Endothelial cell of umbilical vein (primary cell): ENCODE measurements at regions of chr12 and their contacts with region 1.

Region 1: DNA sequence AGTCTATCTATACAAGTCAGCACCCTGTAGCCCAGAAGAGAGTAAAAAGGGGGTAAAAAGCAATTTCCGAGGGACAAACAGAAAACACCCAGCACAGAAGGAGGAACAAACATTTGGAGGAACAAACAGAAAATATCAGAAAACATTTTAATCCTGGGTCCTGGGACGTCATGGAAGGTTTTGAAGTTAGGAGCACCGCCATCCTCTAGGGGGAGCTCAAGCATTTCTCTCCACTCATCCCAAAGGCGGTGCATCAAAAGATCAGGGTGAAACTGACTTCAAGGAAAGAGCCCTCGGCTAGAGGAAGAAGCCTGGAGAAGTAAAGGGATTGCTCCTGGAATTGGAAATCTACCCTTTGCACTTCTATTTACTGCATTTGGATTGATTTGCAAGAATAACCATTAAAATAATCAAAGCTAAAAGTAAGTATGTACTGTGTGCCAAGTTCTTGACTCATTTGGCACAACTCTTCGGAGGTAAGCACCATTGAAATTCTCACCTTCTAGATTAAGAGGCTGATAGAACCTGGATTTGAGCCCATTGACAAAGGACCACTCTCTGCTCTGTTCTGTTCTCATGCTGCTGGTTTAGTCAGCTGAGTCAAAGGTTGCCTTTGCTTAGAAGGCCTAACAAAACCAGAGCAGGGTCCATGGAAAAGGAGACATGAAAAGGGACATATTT is 17.2 kb upstream of the POC1B start:
- DNase-seq: peak; percentile 79
- H3K4me3 ChIP-seq: no peak overlapping the region
- H3K27ac ChIP-seq: no peak overlapping the region
- H3K4me1 ChIP-seq: peaks cover 20% of the 10 kb centered on the region
- H3K27me3 ChIP-seq: no peaks in the 10 kb centered on the region
- CTCF ChIP-seq: peak; percentile 80 to 82
- POLR2A ChIP-seq: no peak

Region 2: DNA sequence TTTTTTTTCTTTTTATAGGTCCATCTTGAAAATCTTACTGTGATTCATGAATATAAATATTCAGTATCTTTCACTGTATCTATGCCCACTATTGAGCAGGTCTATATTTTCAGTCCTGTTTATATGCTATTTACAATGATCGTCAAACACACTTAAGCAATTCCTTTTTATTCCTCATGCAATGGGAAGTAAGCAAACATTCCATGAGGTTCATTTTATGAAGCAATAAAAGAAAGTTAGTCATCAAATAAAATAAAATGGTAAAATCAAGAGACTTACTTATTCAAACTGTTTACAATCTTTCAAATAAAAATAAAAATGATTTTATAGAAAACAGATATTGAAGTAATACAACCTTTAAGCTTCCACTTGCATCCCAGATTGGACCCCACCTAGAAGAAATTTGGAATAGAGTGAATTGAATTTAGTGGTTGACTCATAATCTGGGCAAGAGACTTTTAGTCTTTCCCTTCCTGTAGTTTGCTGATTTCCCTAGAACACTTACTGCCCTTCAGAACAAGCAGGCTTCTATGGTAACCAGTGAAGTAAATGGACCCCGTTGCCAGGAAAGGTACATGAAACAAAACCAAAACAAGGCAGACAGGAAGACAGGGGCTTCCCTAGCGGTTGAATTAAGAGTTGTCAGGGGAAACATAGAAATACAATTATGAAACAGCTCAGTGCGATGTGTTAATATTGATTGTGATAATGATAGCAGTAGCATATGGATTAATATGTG is 406.6 kb after region 1 on chr12:
- CTCF ChIA-PET with region 1: interaction called, 5 read pairs
- POLR2A ChIA-PET with region 1: no interaction called
- dilution Hi-C with region 1: no loop called
- intact Hi-C with region 1: loop called (anchors 1 kb)
- DNase-seq: peak; percentile 98
- H3K4me3 ChIP-seq: no peak overlapping the region
- H3K27ac ChIP-seq: peak overlapping the region; percentile 99
- H3K4me1 ChIP-seq: peaks cover 33% of the 10 kb centered on the region
- H3K27me3 ChIP-seq: no peaks in the 10 kb centered on the region
- CTCF ChIP-seq: peak; percentile 21 to 36
- POLR2A ChIP-seq: no peak

Region 3: GRCh38 chr12:90199006-90199405 is 656.0 kb after region 1 on chr12:
- CTCF ChIA-PET with region 1: no interaction called
- POLR2A ChIA-PET with region 1: no interaction called
- dilution Hi-C with region 1: no loop called
- intact Hi-C with region 1: loop called (anchors 5 kb)
- DNase-seq: peak; percentile 91
- H3K4me3 ChIP-seq: peak overlapping the region in 1 of 3 experiments; percentile 17
- H3K27ac ChIP-seq: peak overlapping the region; percentile 95
- H3K4me1 ChIP-seq: peaks cover 27% of the 10 kb centered on the region
- H3K27me3 ChIP-seq: no peaks in the 10 kb centered on the region
- CTCF ChIP-seq: no peak
- POLR2A ChIP-seq: no peak

Region 4: GRCh38 chr12:90611048-90611447 is 1068.0 kb after region 1 on chr12:
- CTCF ChIA-PET with region 1: no interaction called
- POLR2A ChIA-PET with region 1: no interaction called
- dilution Hi-C with region 1: no loop called
- intact Hi-C with region 1: loop called (anchors 10 kb)
- DNase-seq: no peak
- H3K4me3 ChIP-seq: no peak overlapping the region
- H3K27ac ChIP-seq: no peak overlapping the region
- H3K4me1 ChIP-seq: no peaks in the 10 kb centered on the region
- H3K27me3 ChIP-seq: no peaks in the 10 kb centered on the region
- CTCF ChIP-seq: no peak
- POLR2A ChIP-seq: no peak

Region 5: DNA sequence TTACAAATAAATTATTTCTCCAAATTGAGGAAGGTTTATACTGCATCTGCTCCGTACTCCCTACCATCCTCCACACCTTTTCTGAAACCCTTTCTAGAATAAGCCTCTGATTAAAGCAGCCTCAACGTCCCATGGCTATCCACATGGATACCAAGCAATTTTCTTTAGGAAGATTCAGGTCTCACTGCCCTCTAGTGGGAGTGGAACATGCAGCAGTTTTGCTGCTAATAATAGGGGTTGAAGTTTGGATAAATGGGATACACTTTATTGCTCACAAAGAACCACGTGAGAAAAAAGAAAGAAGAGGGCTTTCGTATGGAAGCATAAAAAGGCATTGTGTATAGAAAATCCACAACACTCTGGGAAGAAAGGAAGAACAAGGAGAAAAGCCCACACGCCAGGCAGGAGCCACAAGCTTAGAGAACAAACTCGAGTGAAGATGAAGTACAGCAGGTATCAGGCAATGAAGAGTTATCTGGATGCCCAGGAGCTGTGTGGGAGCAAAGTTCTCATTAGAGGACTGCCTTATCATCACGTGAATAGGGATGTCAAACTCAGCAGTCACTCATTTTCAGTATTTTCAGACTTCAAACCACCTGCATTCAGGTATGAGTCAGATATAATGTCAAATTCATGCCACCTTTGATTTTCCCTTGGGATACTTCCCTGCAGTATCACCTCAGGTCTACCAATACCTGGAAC is 1366.2 kb after region 1 on chr12:
- CTCF ChIA-PET with region 1: interaction called, 15 read pairs
- POLR2A ChIA-PET with region 1: no interaction called
- dilution Hi-C with region 1: no loop called
- intact Hi-C with region 1: loop called (anchors 2 kb)
- DNase-seq: peak; percentile 67
- H3K4me3 ChIP-seq: no peak overlapping the region
- H3K27ac ChIP-seq: no peak overlapping the region
- H3K4me1 ChIP-seq: no peaks in the 10 kb centered on the region
- H3K27me3 ChIP-seq: no peaks in the 10 kb centered on the region
- CTCF ChIP-seq: peak; percentile 69 to 71
- POLR2A ChIP-seq: no peak